ENCODE measurements at regions of chr11 and their contacts with region 1.

Region 1: GRCh38 chr11:36289226-36289852 is at the start of gene COMMD9:
- DNase-seq: peak; percentile 98
- H3K4me3 Mint-ChIP-seq: peak within 1 kb of the TSS; percentile 89
- H3K27ac Mint-ChIP-seq: peak within 1 kb of the TSS; percentile 74
- H3K4me1 Mint-ChIP-seq: peaks cover 32% of the 10 kb centered on the region
- H3K27me3 Mint-ChIP-seq: no peaks in the 10 kb centered on the region
- total RNA-seq, gene COMMD9: 23.7 to 28.1 TPM

Region 2: GRCh38 chr11:36131721-36132397 is 157.5 kb before region 1 on chr11:
- CTCF ChIA-PET with region 1: no interaction called
- POLR2A ChIA-PET with region 1: no interaction called
- intact Hi-C with region 1: no loop called
- DNase-seq: peak; percentile 12
- H3K4me3 Mint-ChIP-seq: no peak overlapping the region
- H3K27ac Mint-ChIP-seq: no peak overlapping the region
- H3K4me1 Mint-ChIP-seq: no peaks in the 10 kb centered on the region
- H3K27me3 Mint-ChIP-seq: peaks cover 6% of the 10 kb centered on the region

Region 3: GRCh38 chr11:36249246-36249645 is 40.1 kb before region 1 on chr11:
- CTCF ChIA-PET with region 1: no interaction called
- POLR2A ChIA-PET with region 1: no interaction called
- intact Hi-C with region 1: no loop called
- DNase-seq: no peak
- H3K4me3 Mint-ChIP-seq: no peak overlapping the region
- H3K27ac Mint-ChIP-seq: no peak overlapping the region
- H3K4me1 Mint-ChIP-seq: no peaks in the 10 kb centered on the region
- H3K27me3 Mint-ChIP-seq: peaks cover 28% of the 10 kb centered on the region

Region 4: DNA sequence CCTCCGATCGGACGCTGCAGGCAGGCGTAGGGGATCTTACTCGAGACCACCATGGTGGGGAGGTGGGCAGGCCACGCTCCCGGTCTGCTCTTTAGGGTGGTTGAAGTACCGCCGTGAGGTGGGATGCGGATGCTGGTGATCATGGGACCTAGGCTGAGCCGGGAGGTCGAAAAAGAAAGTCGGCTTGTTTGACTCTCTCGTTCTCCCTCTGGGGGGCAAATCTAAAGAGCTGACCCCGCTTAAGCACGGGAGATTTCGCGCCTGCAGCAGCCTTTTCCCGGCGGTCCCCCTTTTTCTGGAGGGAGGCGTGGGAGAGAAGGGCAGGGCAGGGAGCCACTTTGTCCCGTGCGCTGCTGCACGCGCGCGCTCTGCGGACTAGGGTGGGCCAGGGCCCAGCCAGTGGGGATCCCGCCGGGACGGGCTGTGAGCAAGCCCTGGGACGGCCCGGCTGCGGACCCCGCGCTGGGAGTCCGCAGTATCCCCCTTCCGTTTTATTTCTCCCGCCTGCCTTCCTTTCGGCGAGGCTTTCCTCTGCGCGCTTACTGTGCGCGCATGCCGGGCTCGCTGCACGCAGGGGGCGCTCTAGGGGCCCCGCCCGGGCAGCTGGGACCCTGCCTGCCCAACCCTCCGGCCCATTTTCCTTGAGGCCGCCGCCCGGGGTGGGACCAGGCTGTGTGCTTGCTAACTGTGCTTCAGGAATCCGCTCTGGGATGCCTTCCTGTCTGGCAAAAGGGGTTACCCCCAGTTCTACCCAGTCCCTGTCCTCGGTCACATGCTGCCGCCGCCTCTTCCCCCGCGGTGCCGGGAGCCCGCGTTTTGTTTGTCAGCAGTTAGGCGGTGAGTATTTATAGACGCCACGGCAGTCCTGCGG is 87.8 kb after region 1 on chr11:
- CTCF ChIA-PET with region 1: interaction called, 18 read pairs
- POLR2A ChIA-PET with region 1: no interaction called
- intact Hi-C with region 1: loop called (anchors 1 kb)
- DNase-seq: peak; percentile 82
- H3K4me3 Mint-ChIP-seq: peak overlapping the region; percentile 92
- H3K27ac Mint-ChIP-seq: peak overlapping the region; percentile 84
- H3K4me1 Mint-ChIP-seq: peaks cover 43% of the 10 kb centered on the region
- H3K27me3 Mint-ChIP-seq: peaks cover 9% of the 10 kb centered on the region

Region 5: DNA sequence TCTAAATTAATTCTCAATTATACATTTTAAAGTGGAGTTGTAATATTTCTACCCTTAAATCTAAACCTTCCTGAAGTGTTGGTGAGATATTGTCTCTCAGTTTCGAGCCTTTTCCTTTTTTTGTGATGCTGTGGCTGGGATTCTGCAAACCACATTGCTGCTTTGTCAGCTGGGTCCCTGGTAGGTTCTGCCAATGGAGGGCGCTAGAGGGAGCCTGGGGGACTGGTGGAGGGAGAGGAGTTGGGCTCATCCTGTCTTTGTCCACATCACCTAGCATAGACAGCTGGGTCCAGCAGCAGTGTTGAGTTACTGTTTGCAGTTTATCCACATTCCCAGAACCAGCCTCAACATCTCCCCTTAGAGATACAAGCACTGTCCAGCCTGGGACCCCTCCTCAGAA is 179.7 kb after region 1 on chr11:
- CTCF ChIA-PET with region 1: interaction called, 12 read pairs
- POLR2A ChIA-PET with region 1: no interaction called
- intact Hi-C with region 1: no loop called
- DNase-seq: peak; percentile 63
- H3K4me3 Mint-ChIP-seq: no peak overlapping the region
- H3K27ac Mint-ChIP-seq: no peak overlapping the region
- H3K4me1 Mint-ChIP-seq: peaks cover 11% of the 10 kb centered on the region
- H3K27me3 Mint-ChIP-seq: no peaks in the 10 kb centered on the region

Region 6: GRCh38 chr11:36500315-36500721 is 211.0 kb after region 1 on chr11:
- CTCF ChIA-PET with region 1: interaction called, 15 read pairs
- POLR2A ChIA-PET with region 1: no interaction called
- intact Hi-C with region 1: no loop called
- DNase-seq: no peak
- H3K4me3 Mint-ChIP-seq: no peak overlapping the region
- H3K27ac Mint-ChIP-seq: peak overlapping the region; percentile 6
- H3K4me1 Mint-ChIP-seq: peaks cover 28% of the 10 kb centered on the region
- H3K27me3 Mint-ChIP-seq: no peaks in the 10 kb centered on the region

Region 7: GRCh38 chr11:36672813-36673450 is 383.6 kb after region 1 on chr11:
- CTCF ChIA-PET with region 1: interaction called, 4 read pairs
- POLR2A ChIA-PET with region 1: no interaction called
- intact Hi-C with region 1: loop called (anchors 1 kb)
- DNase-seq: no peak
- H3K4me3 Mint-ChIP-seq: no peak overlapping the region
- H3K27ac Mint-ChIP-seq: no peak overlapping the region
- H3K4me1 Mint-ChIP-seq: no peaks in the 10 kb centered on the region
- H3K27me3 Mint-ChIP-seq: peaks cover 15% of the 10 kb centered on the region